ENCODE measurements at regions of chr1 and their contacts with region 1.

Region 1: GRCh38 chr1:53945433-53946251 is at the start of gene IFT25:
- DNase-seq: peak; percentile 96 to 100 (median 98)
- ATAC-seq: peak; percentile 77
- H3K4me3 ChIP-seq: peak within 1 kb of the TSS; percentile 89
- H3K4me3 Mint-ChIP-seq: peak within 1 kb of the TSS; percentile 99
- H3K27ac ChIP-seq: peak within 1 kb of the TSS; percentile 60 to 80
- H3K27ac Mint-ChIP-seq: peak within 1 kb of the TSS; percentile 91
- H3K4me1 ChIP-seq: peaks cover 28% of the 10 kb centered on the region
- H3K4me1 Mint-ChIP-seq: peaks cover 59% of the 10 kb centered on the region
- H3K27me3 ChIP-seq: no peaks in the 10 kb centered on the region
- H3K27me3 Mint-ChIP-seq: no peaks in the 10 kb centered on the region
- CTCF ChIP-seq: no peak
- total RNA-seq, gene IFT25: 12.7 to 13.9 TPM

Region 2: GRCh38 chr1:52365746-52366516 is 1579.7 kb before region 1 on chr1 and contains the start of gene CC2D1B:
- CTCF ChIA-PET with region 1: no interaction called
- POLR2A ChIA-PET with region 1: no interaction called
- intact Hi-C with region 1: loop called in 1 of 2 experiments (anchors 10 kb)
- DNase-seq: peak; percentile 97 to 100 (median 99)
- ATAC-seq: peak; percentile 79
- H3K4me3 ChIP-seq: peak within 1 kb of the TSS; percentile 76
- H3K4me3 Mint-ChIP-seq: peak within 1 kb of the TSS; percentile 94
- H3K27ac ChIP-seq: peak within 1 kb of the TSS; percentile 77 to 89
- H3K27ac Mint-ChIP-seq: peak within 1 kb of the TSS; percentile 96
- H3K4me1 ChIP-seq: peaks cover 50% of the 10 kb centered on the region
- H3K4me1 Mint-ChIP-seq: peaks cover 60% of the 10 kb centered on the region
- H3K27me3 ChIP-seq: no peaks in the 10 kb centered on the region
- H3K27me3 Mint-ChIP-seq: no peaks in the 10 kb centered on the region
- CTCF ChIP-seq: no peak
- total RNA-seq, gene CC2D1B: 46.5 to 47.5 TPM

Region 3: GRCh38 chr1:53485478-53486394 is 459.9 kb before region 1 on chr1:
- CTCF ChIA-PET with region 1: no interaction called
- POLR2A ChIA-PET with region 1: no interaction called
- intact Hi-C with region 1: loop called in 1 of 2 experiments (anchors 5 kb)
- DNase-seq: peak; percentile 24 to 75 (median 46)
- ATAC-seq: no peak
- H3K4me3 ChIP-seq: no peak overlapping the region
- H3K4me3 Mint-ChIP-seq: no peak overlapping the region
- H3K27ac ChIP-seq: no peak overlapping the region
- H3K27ac Mint-ChIP-seq: no peak overlapping the region
- H3K4me1 ChIP-seq: peaks cover 7% of the 10 kb centered on the region
- H3K4me1 Mint-ChIP-seq: no peaks in the 10 kb centered on the region
- H3K27me3 ChIP-seq: peaks cover 3 to 12% of the 10 kb centered on the region in 2 experiments
- H3K27me3 Mint-ChIP-seq: peaks cover 42% of the 10 kb centered on the region
- CTCF ChIP-seq: peak; percentile 76

Region 4: DNA sequence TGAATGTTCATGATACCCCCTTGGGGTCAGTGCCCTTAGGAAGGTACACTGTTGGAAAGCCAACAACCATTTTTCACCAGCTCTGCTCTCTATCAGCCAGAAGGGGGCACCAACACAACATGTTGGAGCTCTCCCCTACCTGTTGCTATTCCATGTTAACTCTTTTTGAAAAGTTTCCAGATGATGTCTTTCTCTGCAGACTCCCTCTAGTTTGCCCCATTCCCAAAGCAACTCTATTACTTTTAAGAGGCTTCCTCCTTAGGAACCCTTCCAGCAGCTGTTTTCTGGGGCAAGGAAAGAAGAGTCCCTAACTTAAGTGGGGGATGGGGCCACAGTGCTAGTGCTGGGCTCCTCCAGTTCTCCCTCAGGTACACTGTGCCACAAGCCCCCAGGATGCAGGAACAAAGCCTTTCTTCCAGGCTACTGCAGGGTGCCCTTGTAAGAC is 84.7 kb before region 1 on chr1:
- CTCF ChIA-PET with region 1: interaction called, 14 read pairs
- POLR2A ChIA-PET with region 1: interaction called, 10 read pairs
- intact Hi-C with region 1: loop called (anchors 1 to 2 kb)
- DNase-seq: peak; percentile 8 to 80 (median 32)
- ATAC-seq: peak; percentile 88
- H3K4me3 ChIP-seq: no peak overlapping the region
- H3K4me3 Mint-ChIP-seq: no peak overlapping the region
- H3K27ac ChIP-seq: no peak overlapping the region
- H3K27ac Mint-ChIP-seq: no peak overlapping the region
- H3K4me1 ChIP-seq: peaks cover 5% of the 10 kb centered on the region
- H3K4me1 Mint-ChIP-seq: peaks cover 9% of the 10 kb centered on the region
- H3K27me3 ChIP-seq: no peaks in the 10 kb centered on the region
- H3K27me3 Mint-ChIP-seq: no peaks in the 10 kb centered on the region
- CTCF ChIP-seq: peak; percentile 79

Region 5: DNA sequence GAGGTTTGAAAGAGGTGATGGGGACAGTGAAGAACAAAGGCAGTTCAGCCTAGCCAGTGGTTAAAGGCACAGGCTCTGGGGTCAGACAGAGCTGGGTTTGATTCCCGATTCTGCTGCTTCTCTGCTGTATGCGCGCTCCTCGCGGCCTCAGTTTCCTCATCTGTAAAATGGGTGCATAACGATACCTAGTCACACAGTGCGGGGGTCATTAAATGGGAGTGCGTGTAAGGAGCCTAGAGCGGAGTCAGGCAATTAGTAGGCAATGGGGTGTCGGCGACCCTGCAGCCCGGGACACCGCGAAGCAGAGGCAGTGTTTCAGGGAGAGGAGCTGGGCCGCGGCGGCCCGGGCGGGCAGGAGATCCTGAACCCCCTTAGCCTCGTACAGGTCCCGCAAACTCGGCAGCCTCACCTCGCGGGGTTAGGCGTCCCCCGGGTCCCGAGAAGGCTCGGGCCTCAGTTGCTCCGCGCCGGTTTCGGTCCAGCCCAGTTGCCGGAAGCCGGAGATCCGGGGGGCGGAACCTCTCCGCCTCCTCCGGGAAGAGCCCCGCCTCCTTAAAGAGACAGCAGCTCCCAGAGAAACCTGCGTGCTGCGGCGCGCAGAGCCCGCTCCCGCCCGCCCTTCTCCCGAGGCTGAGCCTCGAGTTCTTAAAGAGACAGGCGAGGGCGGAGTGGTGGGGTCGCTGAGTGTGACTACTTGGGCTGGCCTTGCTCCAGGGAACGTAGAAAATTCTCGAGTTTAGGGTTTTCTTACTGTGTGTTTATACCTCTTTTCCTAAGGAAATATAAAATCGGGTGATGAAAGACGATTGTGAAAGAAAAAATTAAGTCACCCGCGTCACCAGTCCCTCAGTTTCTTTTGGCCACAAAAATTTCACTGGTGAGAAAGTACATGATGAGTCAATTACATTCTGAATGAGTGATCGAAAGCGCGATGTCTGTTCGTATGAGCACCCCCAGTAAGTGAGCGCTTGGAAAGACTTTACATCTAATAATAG is 56.0 kb before region 1 on chr1 and contains the start of gene YIPF1:
- CTCF ChIA-PET with region 1: no interaction called
- POLR2A ChIA-PET with region 1: interaction called, 31 read pairs
- intact Hi-C with region 1: loop called (anchors 1 to 2 kb)
- DNase-seq: peak; percentile 69 to 92 (median 84)
- ATAC-seq: peak; percentile 99
- H3K4me3 ChIP-seq: peak within 1 kb of the TSS; percentile 98
- H3K4me3 Mint-ChIP-seq: peak within 1 kb of the TSS; percentile 94
- H3K27ac ChIP-seq: peak within 1 kb of the TSS; percentile 29 to 45
- H3K27ac Mint-ChIP-seq: peak within 1 kb of the TSS; percentile 93
- H3K4me1 ChIP-seq: peaks cover 18% of the 10 kb centered on the region
- H3K4me1 Mint-ChIP-seq: peaks cover 44% of the 10 kb centered on the region
- H3K27me3 ChIP-seq: no peaks in the 10 kb centered on the region
- H3K27me3 Mint-ChIP-seq: no peaks in the 10 kb centered on the region
- CTCF ChIP-seq: no peak
- total RNA-seq, gene YIPF1: 4.3 to 5.5 TPM

Region 6: DNA sequence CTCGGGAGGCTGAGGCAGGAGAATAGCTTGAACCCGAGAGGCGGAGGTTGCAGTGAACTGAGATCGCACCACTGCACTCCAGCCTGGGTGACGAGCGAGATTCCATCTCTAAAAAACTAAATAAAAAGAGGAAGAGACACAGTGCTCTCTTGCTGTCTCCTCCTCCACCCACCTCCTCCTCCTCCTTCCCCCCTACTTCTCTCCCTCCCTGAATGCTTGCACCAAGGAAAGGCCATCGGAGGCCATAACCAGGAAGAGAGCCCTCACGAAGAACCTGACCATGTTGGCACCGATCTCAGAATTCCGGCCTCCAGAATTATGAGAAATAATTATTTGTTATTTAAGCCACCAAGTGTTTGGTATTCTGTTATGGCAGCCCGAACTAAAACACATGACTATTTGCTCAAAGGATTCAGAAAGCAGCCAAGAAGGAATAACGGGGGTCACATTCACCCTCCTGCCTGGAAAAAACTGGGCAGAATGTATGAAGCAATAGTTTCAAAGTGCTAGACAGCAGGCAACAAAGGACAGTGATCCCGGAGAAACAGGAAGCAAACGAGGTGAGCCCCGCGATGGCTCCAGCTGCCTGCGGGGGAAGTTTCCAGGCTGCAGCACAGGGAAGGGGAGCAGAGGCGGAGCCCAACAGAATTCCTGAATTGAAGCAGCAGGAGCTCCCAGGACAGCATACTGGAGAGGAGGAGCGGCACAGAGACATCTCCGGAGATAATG is 36.6 kb after region 1 on chr1:
- CTCF ChIA-PET with region 1: no interaction called
- POLR2A ChIA-PET with region 1: no interaction called
- intact Hi-C with region 1: no loop called
- DNase-seq: no peak
- ATAC-seq: no peak
- H3K4me3 ChIP-seq: no peak overlapping the region
- H3K4me3 Mint-ChIP-seq: no peak overlapping the region
- H3K27ac ChIP-seq: no peak overlapping the region
- H3K27ac Mint-ChIP-seq: no peak overlapping the region
- H3K4me1 ChIP-seq: peaks cover 8% of the 10 kb centered on the region
- H3K4me1 Mint-ChIP-seq: peaks cover 30% of the 10 kb centered on the region
- H3K27me3 ChIP-seq: no peaks in the 10 kb centered on the region
- H3K27me3 Mint-ChIP-seq: no peaks in the 10 kb centered on the region
- CTCF ChIP-seq: no peak

Region 7: GRCh38 chr1:54715493-54716298 is 770.1 kb after region 1 on chr1 and contains the start of gene TTC4:
- CTCF ChIA-PET with region 1: no interaction called
- POLR2A ChIA-PET with region 1: interaction called, 5 read pairs
- intact Hi-C with region 1: loop called in 1 of 2 experiments (anchors 10 kb)
- DNase-seq: peak; percentile 67 to 93 (median 81)
- ATAC-seq: peak; percentile 97
- H3K4me3 ChIP-seq: peak within 1 kb of the TSS; percentile 87
- H3K4me3 Mint-ChIP-seq: peak within 1 kb of the TSS; percentile 93
- H3K27ac ChIP-seq: peak within 1 kb of the TSS; percentile 43 to 71
- H3K27ac Mint-ChIP-seq: peak within 1 kb of the TSS; percentile 74
- H3K4me1 ChIP-seq: peaks cover 18% of the 10 kb centered on the region
- H3K4me1 Mint-ChIP-seq: peaks cover 40% of the 10 kb centered on the region
- H3K27me3 ChIP-seq: no peaks in the 10 kb centered on the region
- H3K27me3 Mint-ChIP-seq: no peaks in the 10 kb centered on the region
- CTCF ChIP-seq: no peak
- total RNA-seq, gene TTC4: 7.3 to 7.6 TPM